ENCODE measurements at regions of chr16 and their contacts with region 1.

Region 1: DNA sequence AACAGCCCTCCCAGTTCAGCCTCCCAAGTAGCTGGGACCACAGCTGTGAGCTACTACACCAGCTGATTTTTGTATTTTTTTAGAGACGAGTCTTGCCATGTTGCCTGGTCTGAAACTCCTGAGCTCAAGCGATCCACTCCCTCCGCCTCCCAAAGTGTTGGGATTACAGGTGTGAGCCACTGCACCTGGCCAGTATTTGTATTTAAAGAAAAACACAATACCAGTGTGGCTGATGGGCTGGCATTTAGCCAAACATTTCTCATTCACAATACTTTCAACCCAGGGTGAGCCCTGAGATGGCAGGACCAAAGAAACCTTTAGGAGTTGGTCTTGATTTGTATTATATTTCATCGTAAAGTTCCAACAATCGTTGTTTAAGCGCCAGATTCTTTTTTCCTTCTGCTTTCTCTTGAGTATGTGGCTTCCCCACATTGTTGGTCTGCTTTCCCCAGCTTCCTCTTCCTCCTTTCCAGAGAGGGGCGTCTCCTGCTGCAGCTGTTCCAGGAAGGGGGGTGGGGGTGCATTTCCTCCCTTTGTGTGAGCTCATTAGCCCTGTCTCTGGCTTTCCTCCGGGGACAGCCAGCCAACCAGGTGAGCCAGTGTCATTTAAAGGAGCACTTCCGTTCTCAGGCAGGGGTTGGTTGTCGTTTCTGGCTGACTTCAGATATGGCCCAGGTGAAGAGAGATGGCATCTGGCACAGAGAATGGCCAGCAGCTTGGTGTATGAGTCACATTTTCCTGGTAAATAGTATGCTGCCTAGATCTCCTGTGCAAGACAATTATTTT is 79.9 kb downstream of the GPRC5B start:
- DNase-seq: peak; percentile 88

Region 2: GRCh38 chr16:19753815-19754643 is 50.7 kb before region 1 on chr16:
- intact Hi-C with region 1: loop called (anchors 5 kb)
- DNase-seq: no peak

Region 3: GRCh38 chr16:19876501-19877059 is 71.8 kb after region 1 on chr16:
- intact Hi-C with region 1: loop called (anchors 2 kb)
- DNase-seq: no peak